Activated CD4-positive, alpha-beta T cell treated with anti-CD3 and anti-CD28 coated beads for 36 hours (primary cell): ENCODE measurements at regions of chr1 and their contacts with region 1.

Region 1: GRCh38 chr1:27662707-27663393 is 9.1 kb downstream of the IFI6 start:
- DNase-seq: peak; percentile 94
- ATAC-seq: peak; percentile 84
- H3K4me3 Mint-ChIP-seq: peak overlapping the region; percentile 70
- H3K27ac Mint-ChIP-seq: peak overlapping the region; percentile 98
- H3K4me1 Mint-ChIP-seq: peaks cover 45% of the 10 kb centered on the region
- H3K27me3 Mint-ChIP-seq: no peaks in the 10 kb centered on the region

Region 2: DNA sequence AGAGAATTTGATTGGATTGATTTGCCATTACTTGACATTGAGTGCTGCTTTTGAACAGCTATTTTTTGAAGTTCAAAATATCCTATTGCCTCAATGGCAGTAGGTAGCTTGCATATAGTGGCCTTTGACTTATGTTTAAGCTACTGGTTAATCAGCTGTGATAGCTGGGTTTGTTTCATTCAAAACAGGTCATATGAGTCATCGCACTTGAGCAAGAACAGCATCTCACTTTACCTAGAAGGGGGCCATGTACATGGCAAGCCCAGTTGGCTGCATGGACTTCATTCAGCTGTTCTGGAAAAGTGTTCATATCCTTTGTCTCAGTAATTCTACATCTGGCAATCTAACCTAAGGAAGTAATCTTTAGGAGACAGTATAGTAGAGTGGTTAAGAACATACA is 996.0 kb before region 1 on chr1:
- CTCF ChIA-PET with region 1: no interaction called
- POLR2A ChIA-PET with region 1: no interaction called
- intact Hi-C with region 1: no loop called
- DNase-seq: peak; percentile 39
- ATAC-seq: peak; percentile 96
- H3K4me3 Mint-ChIP-seq: no peak overlapping the region
- H3K27ac Mint-ChIP-seq: no peak overlapping the region
- H3K4me1 Mint-ChIP-seq: peaks cover 10% of the 10 kb centered on the region
- H3K27me3 Mint-ChIP-seq: no peaks in the 10 kb centered on the region

Region 3: DNA sequence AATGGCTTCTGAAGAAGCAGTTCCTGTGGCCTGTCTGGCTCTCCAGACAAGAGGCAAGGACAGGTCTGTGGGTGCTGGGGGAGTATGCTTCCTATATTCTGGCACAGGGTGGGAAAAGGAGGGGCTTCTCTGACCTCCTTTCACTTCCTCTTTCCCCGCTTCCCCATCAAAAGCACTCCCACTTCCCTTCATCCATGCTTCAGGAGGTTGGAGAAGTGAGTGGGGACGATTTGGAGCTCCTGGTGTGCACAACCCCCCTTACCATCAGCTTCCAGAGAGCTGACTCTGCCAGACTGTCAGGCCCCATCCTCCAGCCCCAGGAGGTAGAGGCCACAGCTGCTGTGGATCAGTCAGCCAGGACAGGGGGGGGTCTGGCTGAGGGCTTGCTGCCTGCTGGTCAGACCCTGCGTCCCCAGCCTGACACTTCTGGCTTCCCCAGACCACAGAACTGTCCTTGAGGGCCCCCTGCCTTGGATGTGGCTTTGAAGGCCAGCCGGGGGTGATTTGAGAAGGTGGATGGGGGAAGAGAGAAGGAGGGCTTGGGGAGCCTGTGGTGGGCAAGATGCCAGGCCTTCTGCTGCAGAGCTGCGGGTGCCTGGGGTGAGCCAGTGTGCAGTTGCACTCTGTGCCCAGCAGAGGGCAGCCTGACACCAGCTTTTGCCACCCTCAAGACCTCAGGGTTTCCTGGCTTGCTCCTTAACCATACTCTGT is 362.4 kb before region 1 on chr1:
- CTCF ChIA-PET with region 1: interaction called, 5 read pairs
- POLR2A ChIA-PET with region 1: no interaction called
- intact Hi-C with region 1: loop called in 1 of 2 experiments (anchors 1 kb)
- DNase-seq: peak; percentile 86
- ATAC-seq: peak; percentile 92
- H3K4me3 Mint-ChIP-seq: no peak overlapping the region
- H3K27ac Mint-ChIP-seq: no peak overlapping the region
- H3K4me1 Mint-ChIP-seq: no peaks in the 10 kb centered on the region
- H3K27me3 Mint-ChIP-seq: no peaks in the 10 kb centered on the region

Region 4: GRCh38 chr1:27416387-27417111 is 246.3 kb before region 1 on chr1:
- CTCF ChIA-PET with region 1: interaction called, 16 read pairs
- POLR2A ChIA-PET with region 1: no interaction called
- intact Hi-C with region 1: loop called in 1 of 2 experiments (anchors 2 kb)
- DNase-seq: peak; percentile 69
- ATAC-seq: peak; percentile 64
- H3K4me3 Mint-ChIP-seq: no peak overlapping the region
- H3K27ac Mint-ChIP-seq: peak overlapping the region; percentile 40
- H3K4me1 Mint-ChIP-seq: peaks cover 40% of the 10 kb centered on the region
- H3K27me3 Mint-ChIP-seq: no peaks in the 10 kb centered on the region

Region 5: GRCh38 chr1:27556781-27557595 is 105.9 kb before region 1 on chr1:
- CTCF ChIA-PET with region 1: interaction called, 13 read pairs
- POLR2A ChIA-PET with region 1: no interaction called
- intact Hi-C with region 1: loop called (anchors 1 to 2 kb)
- DNase-seq: peak; percentile 85
- ATAC-seq: peak; percentile 84
- H3K4me3 Mint-ChIP-seq: no peak overlapping the region
- H3K27ac Mint-ChIP-seq: peak overlapping the region; percentile 47
- H3K4me1 Mint-ChIP-seq: peaks cover 21% of the 10 kb centered on the region
- H3K27me3 Mint-ChIP-seq: no peaks in the 10 kb centered on the region

Region 6: DNA sequence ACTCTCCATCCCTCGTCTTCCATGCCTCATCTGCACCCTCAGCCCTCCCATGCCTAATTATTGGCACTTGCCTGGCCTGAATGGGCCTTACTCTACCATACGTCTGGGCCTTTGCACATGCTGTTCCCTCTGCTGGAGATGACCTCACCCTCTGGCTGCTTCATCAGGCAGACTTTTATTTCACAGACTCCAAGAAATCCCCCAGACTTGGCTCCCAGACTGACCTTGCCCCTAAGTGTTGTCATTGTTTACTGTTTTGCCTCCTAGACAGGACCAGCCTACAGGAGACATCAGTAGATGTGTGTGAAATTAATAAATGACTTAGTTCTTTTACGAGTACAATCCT is 53.7 kb before region 1 on chr1:
- CTCF ChIA-PET with region 1: interaction called, 172 read pairs
- POLR2A ChIA-PET with region 1: interaction called, 7 read pairs
- intact Hi-C with region 1: loop called (anchors 1 kb)
- DNase-seq: peak; percentile 24
- ATAC-seq: peak; percentile 9
- H3K4me3 Mint-ChIP-seq: no peak overlapping the region
- H3K27ac Mint-ChIP-seq: no peak overlapping the region
- H3K4me1 Mint-ChIP-seq: peaks cover 16% of the 10 kb centered on the region
- H3K27me3 Mint-ChIP-seq: no peaks in the 10 kb centered on the region

Region 7: GRCh38 chr1:27634177-27634984 is 28.5 kb before region 1 on chr1:
- CTCF ChIA-PET with region 1: interaction called, 8 read pairs
- POLR2A ChIA-PET with region 1: no interaction called
- intact Hi-C with region 1: loop called (anchors 1 to 2 kb)
- DNase-seq: peak; percentile 58
- ATAC-seq: no peak
- H3K4me3 Mint-ChIP-seq: peak overlapping the region; percentile 39
- H3K27ac Mint-ChIP-seq: no peak overlapping the region
- H3K4me1 Mint-ChIP-seq: peaks cover 62% of the 10 kb centered on the region
- H3K27me3 Mint-ChIP-seq: no peaks in the 10 kb centered on the region

Region 8: DNA sequence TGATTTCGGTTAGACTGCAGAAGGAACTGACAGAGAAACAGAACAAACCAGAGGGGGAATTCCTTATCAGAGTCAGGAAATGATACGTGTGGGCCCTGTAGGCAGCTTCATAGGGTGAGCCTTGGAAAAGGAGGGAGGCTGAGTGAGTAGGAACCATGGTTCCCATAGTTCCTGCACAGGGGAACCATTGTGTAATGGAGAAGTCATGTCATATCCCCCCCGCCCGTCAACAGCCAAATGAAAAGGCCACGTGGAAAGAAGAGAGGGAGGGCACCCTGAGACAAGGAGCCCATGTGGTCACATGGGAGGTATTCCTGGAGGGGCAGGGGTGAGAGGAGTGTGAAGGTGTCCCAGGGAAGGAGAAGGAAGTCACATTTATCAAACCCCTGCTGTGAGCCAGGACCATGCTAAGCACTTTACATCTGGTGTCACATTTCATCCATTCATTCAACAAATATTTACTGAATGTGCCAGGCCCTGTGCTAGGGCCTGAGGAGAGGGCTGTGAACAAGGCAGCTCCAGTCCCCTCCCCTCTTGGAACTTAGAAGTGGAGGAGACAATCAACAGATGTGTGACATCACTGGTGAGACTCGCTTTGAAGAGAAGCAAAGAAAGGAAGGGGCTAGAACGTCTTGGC is 12.2 kb before region 1 on chr1:
- CTCF ChIA-PET with region 1: interaction called, 15 read pairs
- POLR2A ChIA-PET with region 1: no interaction called
- intact Hi-C with region 1: no loop called
- DNase-seq: no peak
- ATAC-seq: peak; percentile 36
- H3K4me3 Mint-ChIP-seq: no peak overlapping the region
- H3K27ac Mint-ChIP-seq: peak overlapping the region; percentile 58
- H3K4me1 Mint-ChIP-seq: peaks cover 14% of the 10 kb centered on the region
- H3K27me3 Mint-ChIP-seq: no peaks in the 10 kb centered on the region